Activated naive CD4-positive, alpha-beta T cell treated with anti-CD3 and anti-CD28 coated beads for 36 hours (primary cell): ENCODE measurements at regions of chr20 and their contacts with region 1.

Region 1: GRCh38 chr20:3115190-3116107 is 30.9 kb upstream of the AVP start:
- DNase-seq: no peak
- H3K4me3 Mint-ChIP-seq: no peak overlapping the region
- H3K27ac Mint-ChIP-seq: no peak overlapping the region
- H3K4me1 Mint-ChIP-seq: peaks cover 13% of the 10 kb centered on the region
- H3K27me3 Mint-ChIP-seq: no peaks in the 10 kb centered on the region

Region 2: GRCh38 chr20:3068986-3069900 is 46.2 kb before region 1 on chr20:
- CTCF ChIA-PET with region 1: interaction called, 28 read pairs
- intact Hi-C with region 1: loop called (anchors 1 kb)
- DNase-seq: peak; percentile 62
- H3K4me3 Mint-ChIP-seq: no peak overlapping the region
- H3K27ac Mint-ChIP-seq: no peak overlapping the region
- H3K4me1 Mint-ChIP-seq: peaks cover 19% of the 10 kb centered on the region
- H3K27me3 Mint-ChIP-seq: no peaks in the 10 kb centered on the region

Region 3: GRCh38 chr20:3156811-3157619 is 41.6 kb after region 1 on chr20:
- CTCF ChIA-PET with region 1: interaction called, 6 read pairs
- intact Hi-C with region 1: loop called (anchors 1 kb)
- DNase-seq: peak; percentile 42
- H3K4me3 Mint-ChIP-seq: peak overlapping the region; percentile 66
- H3K27ac Mint-ChIP-seq: peak overlapping the region; percentile 91
- H3K4me1 Mint-ChIP-seq: peaks cover 53% of the 10 kb centered on the region
- H3K27me3 Mint-ChIP-seq: no peaks in the 10 kb centered on the region

Region 4: DNA sequence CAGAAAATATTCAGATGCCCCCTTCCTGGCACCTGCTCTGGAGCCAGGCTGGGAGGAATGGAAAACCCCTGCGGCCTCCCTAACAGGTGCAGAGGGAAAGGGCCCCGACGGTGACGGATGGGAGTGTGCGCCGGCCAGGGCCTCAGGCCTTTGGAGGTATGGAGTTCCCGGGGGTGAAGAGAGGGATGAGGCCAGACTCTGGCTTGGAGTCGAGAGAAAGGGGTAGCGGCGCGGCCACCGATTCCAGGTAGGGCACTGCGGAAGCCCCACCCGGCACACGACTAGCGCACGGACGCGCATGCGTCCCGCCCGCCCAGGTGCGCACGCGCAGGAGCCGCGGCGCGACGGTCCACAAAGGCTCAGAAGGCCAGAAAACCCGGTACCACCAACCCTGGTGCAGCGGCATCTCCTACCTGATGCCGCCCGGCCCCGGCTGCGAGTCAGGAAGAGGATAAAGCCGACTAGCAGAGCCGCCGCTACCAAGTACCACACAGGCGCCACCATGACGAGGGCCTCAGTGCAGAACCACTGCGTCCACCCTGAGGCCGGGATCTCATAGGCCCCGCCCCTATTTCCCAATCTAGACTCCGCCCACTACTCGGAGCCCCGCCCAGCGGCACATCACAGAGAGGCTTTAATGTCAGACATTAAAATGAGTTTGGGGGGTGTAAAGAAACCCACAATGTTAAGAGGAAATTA is 88.8 kb after region 1 on chr20 and contains the start of gene DDRGK1:
- CTCF ChIA-PET with region 1: interaction called, 3 read pairs
- intact Hi-C with region 1: loop called (anchors 1 kb)
- DNase-seq: peak; percentile 96
- H3K4me3 Mint-ChIP-seq: peak within 1 kb of the TSS; percentile 97
- H3K27ac Mint-ChIP-seq: peak within 1 kb of the TSS; percentile 97
- H3K4me1 Mint-ChIP-seq: peaks cover 18% of the 10 kb centered on the region
- H3K27me3 Mint-ChIP-seq: no peaks in the 10 kb centered on the region
- total RNA-seq, gene DDRGK1: 78.2 to 79.5 TPM